B cell (primary cell): ENCODE measurements at regions of chr2 and their contacts with region 1.

Region 1: GRCh38 chr2:60385648-60386047 is 167.8 kb downstream of the BCL11A start:
- DNase-seq: no peak
- ATAC-seq: no peak
- H3K4me3 ChIP-seq: no peak overlapping the region
- H3K4me3 Mint-ChIP-seq: no peak overlapping the region
- H3K27ac ChIP-seq: no peak overlapping the region
- H3K27ac Mint-ChIP-seq: peak overlapping the region; percentile 60
- H3K4me1 ChIP-seq: peaks cover 11 to 22% of the 10 kb centered on the region in 2 donors
- H3K4me1 Mint-ChIP-seq: peaks cover 55% of the 10 kb centered on the region
- H3K27me3 ChIP-seq: no peaks in the 10 kb centered on the region
- H3K27me3 Mint-ChIP-seq: no peaks in the 10 kb centered on the region
- CTCF ChIP-seq: no peak

Region 2: GRCh38 chr2:60347781-60348180 is 37.9 kb before region 1 on chr2:
- CTCF ChIA-PET with region 1: no interaction called
- POLR2A ChIA-PET with region 1: no interaction called
- intact Hi-C with region 1: loop called (anchors 2 kb)
- DNase-seq: no peak
- ATAC-seq: no peak
- H3K4me3 ChIP-seq: no peak overlapping the region
- H3K4me3 Mint-ChIP-seq: no peak overlapping the region
- H3K27ac ChIP-seq: peak overlapping the region in 1 of 2 donors; percentile 23
- H3K27ac Mint-ChIP-seq: peak overlapping the region; percentile 28
- H3K4me1 ChIP-seq: peaks cover 52 to 60% of the 10 kb centered on the region in 2 donors
- H3K4me1 Mint-ChIP-seq: peaks cover 63% of the 10 kb centered on the region
- H3K27me3 ChIP-seq: no peaks in the 10 kb centered on the region
- H3K27me3 Mint-ChIP-seq: no peaks in the 10 kb centered on the region
- CTCF ChIP-seq: no peak